Endothelial cell of umbilical vein (primary cell): ENCODE measurements at regions of chr9 and their contacts with region 1.

Region 1: GRCh38 chr9:79129865-79130480 is 441.8 kb upstream of the TLE4 start:
- DNase-seq: peak; percentile 58
- H3K4me3 ChIP-seq: no peak overlapping the region
- H3K27ac ChIP-seq: no peak overlapping the region
- H3K4me1 ChIP-seq: no peaks in the 10 kb centered on the region
- H3K27me3 ChIP-seq: no peaks in the 10 kb centered on the region
- CTCF ChIP-seq: peak; percentile 80 to 86
- POLR2A ChIP-seq: no peak

Region 2: GRCh38 chr9:78439190-78439865 is 690.6 kb before region 1 on chr9:
- CTCF ChIA-PET with region 1: interaction called, 8 read pairs
- POLR2A ChIA-PET with region 1: no interaction called
- dilution Hi-C with region 1: no loop called
- intact Hi-C with region 1: loop called (anchors 2 kb)
- DNase-seq: peak; percentile 76
- H3K4me3 ChIP-seq: no peak overlapping the region
- H3K27ac ChIP-seq: no peak overlapping the region
- H3K4me1 ChIP-seq: no peaks in the 10 kb centered on the region
- H3K27me3 ChIP-seq: peaks cover 4 to 18% of the 10 kb centered on the region in 2 experiments
- CTCF ChIP-seq: peak; percentile 89 to 91
- POLR2A ChIP-seq: no peak

Region 3: GRCh38 chr9:78820855-78821822 is 308.8 kb before region 1 on chr9:
- CTCF ChIA-PET with region 1: interaction called, 29 read pairs
- POLR2A ChIA-PET with region 1: no interaction called
- dilution Hi-C with region 1: no loop called
- intact Hi-C with region 1: loop called (anchors 1 kb)
- DNase-seq: peak; percentile 55
- H3K4me3 ChIP-seq: peak overlapping the region in 1 of 3 experiments; percentile 34
- H3K27ac ChIP-seq: peak overlapping the region; percentile 14
- H3K4me1 ChIP-seq: no peaks in the 10 kb centered on the region
- H3K27me3 ChIP-seq: no peaks in the 10 kb centered on the region
- CTCF ChIP-seq: peak; percentile 49 to 52
- POLR2A ChIP-seq: no peak

Region 4: GRCh38 chr9:79080536-79080935 is 49.4 kb before region 1 on chr9:
- CTCF ChIA-PET with region 1: no interaction called
- POLR2A ChIA-PET with region 1: no interaction called
- dilution Hi-C with region 1: no loop called
- intact Hi-C with region 1: no loop called
- DNase-seq: no peak
- H3K4me3 ChIP-seq: no peak overlapping the region
- H3K27ac ChIP-seq: no peak overlapping the region
- H3K4me1 ChIP-seq: no peaks in the 10 kb centered on the region
- H3K27me3 ChIP-seq: no peaks in the 10 kb centered on the region
- CTCF ChIP-seq: no peak
- POLR2A ChIP-seq: no peak

Region 5: GRCh38 chr9:79140773-79141172 is 10.8 kb after region 1 on chr9:
- CTCF ChIA-PET with region 1: interaction called, 23 read pairs
- POLR2A ChIA-PET with region 1: no interaction called
- dilution Hi-C with region 1: no loop called
- intact Hi-C with region 1: no loop called
- DNase-seq: no peak
- H3K4me3 ChIP-seq: no peak overlapping the region
- H3K27ac ChIP-seq: no peak overlapping the region
- H3K4me1 ChIP-seq: no peaks in the 10 kb centered on the region
- H3K27me3 ChIP-seq: no peaks in the 10 kb centered on the region
- CTCF ChIP-seq: no peak
- POLR2A ChIP-seq: no peak

Region 6: GRCh38 chr9:80175286-80176150 is 1045.5 kb after region 1 on chr9:
- CTCF ChIA-PET with region 1: interaction called, 5 read pairs
- POLR2A ChIA-PET with region 1: no interaction called
- dilution Hi-C with region 1: no loop called
- intact Hi-C with region 1: loop called (anchors 5 kb)
- DNase-seq: peak; percentile 45
- H3K4me3 ChIP-seq: no peak overlapping the region
- H3K27ac ChIP-seq: no peak overlapping the region
- H3K4me1 ChIP-seq: no peaks in the 10 kb centered on the region
- H3K27me3 ChIP-seq: no peaks in the 10 kb centered on the region
- CTCF ChIP-seq: peak; percentile 33 to 40
- POLR2A ChIP-seq: no peak